HEK293T (cell line): ENCODE measurements at regions of chr10 and their contacts with region 1.

Region 1: DNA sequence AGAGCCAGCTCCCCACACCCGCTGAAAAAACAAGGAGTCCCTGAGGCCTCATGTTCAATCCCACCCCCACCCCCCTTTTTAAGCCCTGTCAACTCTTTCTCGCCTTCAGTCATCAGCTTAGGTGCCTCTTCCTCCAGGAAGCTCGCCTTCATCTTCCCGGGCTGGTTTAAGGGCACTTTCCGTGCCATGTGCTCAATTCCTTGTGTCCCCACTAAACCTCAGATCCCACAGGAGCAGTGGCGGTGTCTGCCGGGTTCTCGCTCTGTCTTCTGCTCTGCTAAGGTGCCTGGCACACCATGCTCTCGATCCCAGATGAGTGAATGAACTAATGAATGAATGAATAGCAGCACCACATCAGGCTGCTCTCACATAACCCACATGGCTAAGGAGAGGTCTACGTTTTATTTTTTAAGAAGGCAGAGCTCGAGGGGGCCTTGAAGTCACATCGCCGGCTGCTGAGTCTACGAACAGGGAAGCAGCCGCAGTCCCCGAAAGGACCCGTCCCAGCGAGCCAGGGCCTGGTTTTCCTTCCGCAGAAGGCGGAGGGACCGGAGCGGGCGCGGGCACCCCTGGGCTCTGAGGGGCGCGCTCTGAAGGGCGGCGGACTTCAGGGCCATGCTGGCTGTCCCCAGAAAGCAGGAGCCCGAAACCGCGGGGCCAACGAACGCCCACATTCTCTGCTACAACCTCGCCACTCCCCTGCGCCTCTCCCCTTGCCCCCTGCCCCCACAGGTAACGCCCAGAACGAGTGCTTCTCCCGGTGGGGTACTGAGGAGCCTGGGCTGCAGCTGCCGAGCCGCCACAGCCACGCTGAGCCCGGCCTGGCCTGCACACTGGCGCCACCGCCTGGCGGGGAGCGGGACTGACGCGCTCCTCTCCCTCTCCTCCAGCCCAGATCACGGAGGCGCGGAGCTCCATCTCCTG is 73.4 kb upstream of the KCNMA1 start:
- DNase-seq: peak; percentile 90

Region 2: DNA sequence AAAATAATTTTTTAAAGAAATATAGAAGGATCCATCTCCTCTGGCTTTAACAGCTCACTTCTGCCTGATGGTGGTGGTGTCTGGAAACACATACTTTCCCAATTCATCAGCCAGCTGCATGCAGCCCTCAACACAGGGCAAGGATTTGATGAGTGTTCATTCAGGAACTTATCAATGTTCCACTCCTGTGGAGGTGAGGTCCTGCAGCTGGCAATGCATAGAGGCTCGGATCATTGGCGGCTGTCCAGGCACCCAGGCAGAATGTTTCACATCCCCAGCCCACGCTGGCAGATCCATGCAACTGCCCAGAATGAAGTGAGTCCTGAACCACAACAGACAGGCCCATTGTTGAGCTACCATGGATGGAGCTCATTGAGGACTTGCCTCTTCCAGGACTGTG is 18.2 kb before region 1 on chr10:
- CTCF ChIA-PET with region 1: interaction called, 28 read pairs
- POLR2A ChIA-PET with region 1: no interaction called
- DNase-seq: no peak

Region 3: GRCh38 chr10:77756319-77757232 is 45.6 kb after region 1 on chr10:
- CTCF ChIA-PET with region 1: interaction called, 15 read pairs
- POLR2A ChIA-PET with region 1: no interaction called
- DNase-seq: peak; percentile 76

Region 4: GRCh38 chr10:77770081-77770867 is 59.3 kb after region 1 on chr10:
- CTCF ChIA-PET with region 1: interaction called, 10 read pairs
- POLR2A ChIA-PET with region 1: no interaction called
- DNase-seq: no peak